ENCODE measurements at regions of chr9 and their contacts with region 1.

Region 1: DNA sequence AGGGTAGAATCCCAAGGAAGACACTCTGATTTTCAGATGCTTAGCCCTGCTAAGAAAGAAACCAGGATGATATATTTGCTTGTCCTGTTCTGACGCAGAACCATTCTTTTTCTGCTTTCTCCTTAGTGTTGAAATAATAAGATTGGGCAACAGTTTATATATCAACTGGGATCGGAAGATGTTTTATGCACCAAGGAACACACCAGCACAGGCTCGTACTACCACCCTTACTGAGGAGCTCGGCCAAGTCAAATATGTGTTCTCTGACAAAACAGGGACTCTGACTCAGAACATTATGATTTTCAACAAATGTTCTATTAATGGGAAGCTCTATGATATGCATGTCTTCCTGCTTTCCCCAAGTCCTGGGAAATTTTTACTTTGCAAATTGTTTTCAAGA is 19.0 kb upstream of the RUSC2 start:
- DNase-seq: peak; percentile 67
- H3K4me3 ChIP-seq: no peak overlapping the region
- H3K27ac ChIP-seq: no peak overlapping the region
- H3K4me1 ChIP-seq: no peaks in the 10 kb centered on the region
- H3K27me3 ChIP-seq: no peaks in the 10 kb centered on the region
- CTCF ChIP-seq: no peak

Region 2: GRCh38 chr9:35140097-35140496 is 330.8 kb before region 1 on chr9:
- CTCF ChIA-PET with region 1: no interaction called
- dilution Hi-C with region 1: loop called (anchors 10 kb)
- in situ Hi-C with region 1: no loop called
- intact Hi-C with region 1: no loop called
- DNase-seq: no peak
- H3K4me3 ChIP-seq: no peak overlapping the region
- H3K27ac ChIP-seq: no peak overlapping the region
- H3K4me1 ChIP-seq: no peaks in the 10 kb centered on the region
- H3K27me3 ChIP-seq: no peaks in the 10 kb centered on the region
- CTCF ChIP-seq: no peak

Region 3: DNA sequence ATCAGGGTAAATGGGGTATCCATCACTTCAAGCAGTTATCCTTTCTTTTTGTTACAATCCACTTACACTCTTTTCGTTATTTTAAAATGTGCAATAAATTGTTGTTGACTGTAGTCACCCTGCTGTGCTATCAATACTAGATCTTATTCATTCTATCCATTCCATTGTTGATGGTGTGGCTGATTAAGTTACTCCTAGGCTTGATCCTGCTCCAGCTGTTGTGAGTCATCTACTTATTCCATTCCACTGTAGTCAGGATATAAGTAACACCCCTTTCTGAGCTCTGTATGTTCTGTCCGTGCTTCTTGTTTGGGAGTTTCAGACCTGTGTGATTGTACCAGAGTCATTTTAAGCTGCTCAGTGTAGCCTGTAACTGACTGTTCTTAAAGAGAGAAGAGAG is 103.4 kb before region 1 on chr9:
- CTCF ChIA-PET with region 1: no interaction called
- dilution Hi-C with region 1: loop called (anchors 25 kb)
- in situ Hi-C with region 1: no loop called
- intact Hi-C with region 1: no loop called
- DNase-seq: peak; percentile 83
- H3K4me3 ChIP-seq: no peak overlapping the region
- H3K27ac ChIP-seq: peak overlapping the region; percentile 11
- H3K4me1 ChIP-seq: peaks cover 9% of the 10 kb centered on the region
- H3K27me3 ChIP-seq: no peaks in the 10 kb centered on the region
- CTCF ChIP-seq: no peak